ENCODE measurements at regions of chr4 and their contacts with region 1.

Region 1: GRCh38 chr4:185774845-185775680 is 36.9 kb downstream of the SORBS2 start:
- DNase-seq: peak; percentile 51 to 87
- H3K4me3 ChIP-seq: peak overlapping the region; percentile 61
- H3K27ac ChIP-seq: peak overlapping the region; percentile 89 to 96
- H3K4me1 ChIP-seq: peaks cover 0 to 32% (median 3%) of the 10 kb centered on the region in 4 donors
- H3K27me3 ChIP-seq: no peaks in the 10 kb centered on the region
- CTCF ChIP-seq: no peak

Region 2: DNA sequence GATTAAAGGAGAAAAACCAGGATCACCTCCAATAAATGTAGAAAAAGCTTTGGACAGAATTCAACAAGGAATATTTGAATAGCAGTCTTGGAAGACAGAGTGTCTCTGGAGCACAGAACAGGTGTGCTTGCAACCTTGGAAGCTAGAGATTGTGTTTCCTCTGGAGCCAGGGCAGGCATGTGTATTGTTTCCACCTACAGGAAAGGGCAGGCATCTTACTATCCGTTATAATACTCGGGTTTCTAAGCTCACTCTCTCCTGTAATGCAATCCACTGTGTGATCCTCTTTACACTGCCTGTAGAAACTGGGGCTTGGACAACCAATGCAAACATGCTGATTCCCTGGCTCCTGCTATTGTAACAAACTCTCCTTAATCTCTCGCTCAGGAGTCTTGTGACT is 317.9 kb before region 1 on chr4:
- intact Hi-C with region 1: no loop called
- DNase-seq: no peak
- H3K4me3 ChIP-seq: no peak overlapping the region
- H3K27ac ChIP-seq: no peak overlapping the region
- H3K4me1 ChIP-seq: no peaks in the 10 kb centered on the region
- H3K27me3 ChIP-seq: no peaks in the 10 kb centered on the region
- CTCF ChIP-seq: no peak

Region 3: GRCh38 chr4:185656467-185656931 is 118.6 kb before region 1 on chr4:
- intact Hi-C with region 1: loop called (anchors 10 kb)
- DNase-seq: peak; percentile 61 to 90
- H3K4me3 ChIP-seq: peak overlapping the region; percentile 67 to 69
- H3K27ac ChIP-seq: peak overlapping the region; percentile 89
- H3K4me1 ChIP-seq: peaks cover 0 to 37% (median 6%) of the 10 kb centered on the region in 4 donors
- H3K27me3 ChIP-seq: no peaks in the 10 kb centered on the region
- CTCF ChIP-seq: peak; percentile 66 to 69

Region 4: GRCh38 chr4:185708348-185708747 is 66.7 kb before region 1 on chr4:
- intact Hi-C with region 1: loop called (anchors 10 kb)
- DNase-seq: no peak
- H3K4me3 ChIP-seq: no peak overlapping the region
- H3K27ac ChIP-seq: peak overlapping the region; percentile 84 to 89
- H3K4me1 ChIP-seq: peaks cover 0 to 69% (median 41%) of the 10 kb centered on the region in 4 donors
- H3K27me3 ChIP-seq: no peaks in the 10 kb centered on the region
- CTCF ChIP-seq: no peak

Region 5: DNA sequence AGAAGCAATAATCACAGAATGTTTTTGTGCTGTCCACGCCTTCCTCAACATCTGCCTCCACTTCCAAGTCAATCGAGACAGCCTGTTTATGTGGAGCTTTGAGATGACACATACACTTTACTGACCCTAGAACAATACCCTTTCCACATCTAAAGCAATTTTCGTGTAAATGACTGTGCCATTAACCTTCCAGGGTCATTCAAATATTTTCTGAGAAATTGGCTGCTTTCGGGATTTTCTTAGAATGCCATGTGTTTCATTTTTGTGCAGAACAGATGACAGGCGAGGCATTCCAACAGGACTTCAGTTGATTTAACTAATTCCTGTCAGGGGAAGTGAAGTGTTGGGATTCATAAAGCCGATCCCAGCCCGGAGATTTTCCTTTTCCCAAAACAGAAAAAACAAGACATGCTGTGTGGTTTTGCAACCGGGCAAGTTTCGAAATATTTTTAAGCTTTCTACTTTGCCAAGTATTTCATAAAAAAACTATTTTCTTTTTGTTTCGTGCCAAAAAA is 37.0 kb before region 1 on chr4:
- intact Hi-C with region 1: loop called (anchors 5 kb)
- DNase-seq: no peak
- H3K4me3 ChIP-seq: peak overlapping the region; percentile 22 to 38
- H3K27ac ChIP-seq: peak overlapping the region; percentile 84 to 89
- H3K4me1 ChIP-seq: peaks cover 0 to 97% (median 70%) of the 10 kb centered on the region in 4 donors
- H3K27me3 ChIP-seq: no peaks in the 10 kb centered on the region
- CTCF ChIP-seq: no peak

Region 6: GRCh38 chr4:186029571-186030398 is 254.7 kb after region 1 on chr4:
- intact Hi-C with region 1: loop called (anchors 5 kb)
- DNase-seq: peak; percentile 86 to 97
- H3K4me3 ChIP-seq: peak overlapping the region; percentile 24 to 26
- H3K27ac ChIP-seq: peak overlapping the region; percentile 73 to 83
- H3K4me1 ChIP-seq: peaks cover 0 to 65% (median 42%) of the 10 kb centered on the region in 4 donors
- H3K27me3 ChIP-seq: no peaks in the 10 kb centered on the region
- CTCF ChIP-seq: no peak